Psoas muscle (tissue), 8 donors: ENCODE measurements at regions of chr19 and their contacts with region 1.

Region 1: GRCh38 chr19:12551060-12551832 is at the start of gene ZNF564:
- DNase-seq: peak; percentile 94 to 96
- ATAC-seq: peak; percentile 97 to 98 (median 98)
- H3K4me3 ChIP-seq: peak within 1 kb of the TSS; percentile 98
- H3K27ac ChIP-seq: peak within 1 kb of the TSS; percentile 97
- H3K4me1 ChIP-seq: peaks cover 23% of the 10 kb centered on the region
- H3K27me3 ChIP-seq: peaks cover 0 to 4% (median 3%) of the 10 kb centered on the region in 3 donors
- CTCF ChIP-seq: no peak
- total RNA-seq, gene ZNF564: 3.5 to 6.2 (median 5.4) TPM

Region 2: DNA sequence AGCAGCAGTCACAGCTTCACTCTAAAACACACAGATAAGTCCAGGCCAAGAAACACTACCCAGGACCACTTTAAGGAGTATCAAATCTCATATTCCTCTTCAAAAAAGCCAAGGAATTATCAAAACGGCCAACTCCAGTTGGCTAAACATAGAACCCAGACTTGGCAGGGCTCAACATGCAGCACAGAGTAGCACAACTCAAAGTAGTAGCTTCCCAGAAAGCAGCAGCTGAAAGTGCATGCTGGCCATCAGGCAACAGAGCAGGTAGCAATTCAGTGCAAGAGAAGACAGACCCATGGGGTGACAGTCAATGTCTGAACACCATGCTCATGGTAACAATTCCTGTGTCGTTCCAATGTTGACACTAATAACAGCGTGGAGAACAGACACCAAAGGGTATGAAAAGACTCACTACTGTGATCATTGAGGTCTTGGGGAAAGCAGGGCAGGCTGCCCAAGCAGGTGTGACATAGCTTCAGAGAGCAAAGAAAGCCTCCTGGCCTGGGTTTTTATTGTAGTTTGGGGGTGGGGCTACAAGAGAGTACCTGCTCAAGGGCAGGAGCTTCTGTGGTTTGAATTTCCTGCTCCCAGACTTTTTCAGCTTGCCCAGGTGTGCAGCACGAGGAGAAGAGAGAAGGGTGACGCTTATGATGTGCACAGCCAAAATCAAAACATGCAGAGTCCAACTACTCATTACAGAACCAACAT is 72.9 kb before region 1 on chr19:
- intact Hi-C with region 1: no loop called
- DNase-seq: no peak
- ATAC-seq: no peak
- H3K4me3 ChIP-seq: no peak overlapping the region
- H3K27ac ChIP-seq: no peak overlapping the region
- H3K4me1 ChIP-seq: peaks cover 8% of the 10 kb centered on the region
- H3K27me3 ChIP-seq: no peaks in the 10 kb centered on the region
- CTCF ChIP-seq: no peak

Region 3: DNA sequence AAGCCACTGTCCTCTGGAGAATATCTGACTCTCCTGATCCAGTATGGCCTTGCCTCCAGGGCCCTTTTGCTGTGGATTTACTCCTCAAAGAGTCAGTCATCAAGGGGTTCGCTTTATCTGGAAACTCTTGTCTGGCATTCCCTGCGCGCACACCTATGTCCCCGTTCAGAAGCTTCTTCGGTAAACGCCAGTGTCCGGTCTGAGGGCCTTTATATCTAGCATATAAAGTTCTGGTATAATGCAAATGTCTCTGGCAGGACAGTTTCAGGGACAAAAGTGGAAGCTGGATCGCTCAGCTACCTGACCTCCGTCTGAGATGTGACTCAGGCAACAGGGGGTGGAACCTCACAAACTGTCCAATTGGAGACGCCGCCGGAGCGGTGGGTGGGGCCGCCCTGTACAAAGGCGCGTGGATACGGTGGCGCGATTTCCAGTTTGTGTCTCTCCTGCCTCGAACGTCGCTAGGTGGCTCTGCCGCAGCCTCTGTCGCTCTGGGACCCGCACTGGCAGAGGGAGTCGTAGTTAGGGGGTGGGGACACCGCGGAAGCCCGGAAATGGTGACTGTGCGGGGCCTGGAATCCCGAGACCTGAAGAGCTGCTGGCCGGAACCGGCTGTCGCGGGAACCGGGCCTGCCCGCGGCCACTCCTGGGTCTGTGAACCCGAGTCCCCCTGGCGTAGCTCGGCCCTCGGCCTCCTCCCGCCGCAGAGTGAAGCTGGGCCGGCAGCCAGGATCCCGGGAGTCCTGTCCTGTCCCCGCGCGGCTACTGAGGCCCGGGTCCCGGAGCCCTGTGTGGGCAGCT is 56.0 kb before region 1 on chr19:
- intact Hi-C with region 1: loop called (anchors 2 to 10 kb)
- DNase-seq: peak; percentile 92 to 96
- ATAC-seq: peak; percentile 100
- H3K4me3 ChIP-seq: peak overlapping the region; percentile 73
- H3K27ac ChIP-seq: peak overlapping the region; percentile 79
- H3K4me1 ChIP-seq: peaks cover 5% of the 10 kb centered on the region
- H3K27me3 ChIP-seq: no peaks in the 10 kb centered on the region
- CTCF ChIP-seq: peak; percentile 39

Region 4: DNA sequence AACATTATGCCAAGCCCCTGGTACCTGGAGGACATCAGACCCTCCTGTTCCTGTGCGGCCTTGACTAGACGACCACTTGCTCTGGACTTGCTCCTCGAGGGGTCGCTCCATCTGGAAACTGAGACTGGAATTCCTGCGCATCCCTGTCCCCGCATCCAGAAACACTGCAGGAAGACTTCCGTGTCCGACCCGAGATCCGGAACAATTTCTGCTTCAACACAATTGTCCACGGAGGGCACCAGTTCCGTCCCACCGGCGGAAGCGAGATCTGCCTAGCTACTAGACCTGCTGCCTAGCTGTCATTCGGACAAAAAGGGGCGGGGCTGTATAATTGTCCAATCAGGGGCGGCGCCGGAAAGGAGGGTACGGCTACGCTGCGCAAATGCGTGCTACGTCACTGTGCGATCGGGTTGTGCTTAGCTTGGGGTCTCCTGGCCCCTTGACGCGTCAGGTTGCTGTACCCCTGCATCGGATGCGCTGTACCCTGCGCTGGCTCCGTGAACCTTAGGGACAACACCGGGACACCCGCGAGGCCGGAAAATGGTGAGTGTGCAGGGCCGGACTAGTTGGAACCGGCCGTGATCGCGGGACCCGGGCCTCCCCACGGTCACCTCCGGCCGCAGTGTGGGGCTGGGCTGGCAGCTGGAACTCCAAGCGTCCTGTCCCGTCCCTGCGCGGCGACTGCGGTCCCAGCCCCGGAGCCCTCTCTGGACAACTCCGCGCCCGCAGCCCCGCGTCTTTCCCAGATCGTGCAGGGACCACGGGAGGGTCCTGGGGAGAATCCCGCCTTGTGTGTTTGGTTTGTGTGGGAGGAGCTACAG is 59.5 kb after region 1 on chr19 and contains the starts of genes ZNF490 and ZNF791:
- intact Hi-C with region 1: loop called in 1 of 2 experiments (anchors 1 kb)
- DNase-seq: peak; percentile 97 to 99
- ATAC-seq: peak; percentile 98 to 100 (median 99)
- H3K4me3 ChIP-seq: peak within 1 kb of the TSS; percentile 100
- H3K27ac ChIP-seq: peak within 1 kb of the TSS; percentile 100
- H3K4me1 ChIP-seq: peaks cover 37% of the 10 kb centered on the region
- H3K27me3 ChIP-seq: no peaks in the 10 kb centered on the region
- CTCF ChIP-seq: no peak
- total RNA-seq, gene ZNF490: 1.6 to 4.9 (median 2.9) TPM
- total RNA-seq, gene ZNF791: 8.7 to 18.9 (median 10.9) TPM